ENCODE measurements at regions of chr3 and their contacts with region 1.

Region 1: DNA sequence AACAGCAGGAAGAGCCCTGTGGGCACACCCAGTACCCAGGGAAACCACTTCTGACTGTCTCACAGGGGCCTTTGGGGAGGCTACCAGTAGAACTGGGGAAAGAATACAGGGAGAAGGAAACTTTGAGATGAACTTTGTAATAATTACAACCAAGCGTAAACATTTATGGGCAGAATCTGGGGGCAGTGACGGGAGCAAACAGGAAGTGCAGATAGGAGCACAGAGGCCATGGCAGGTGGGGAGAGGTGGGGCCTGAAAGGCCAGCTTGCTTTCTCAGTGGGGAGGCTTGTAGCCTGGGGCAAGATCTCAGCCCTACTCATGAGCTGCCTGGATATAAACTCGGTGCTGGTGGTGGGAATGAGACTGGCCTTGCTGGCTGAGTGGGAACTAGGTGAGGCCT is 209.8 kb downstream of the PLCH1 start:
- DNase-seq: no peak
- H3K4me3 ChIP-seq: no peak overlapping the region
- H3K27ac ChIP-seq: no peak overlapping the region
- H3K4me1 ChIP-seq: no peaks in the 10 kb centered on the region
- H3K27me3 ChIP-seq: no peaks in the 10 kb centered on the region
- CTCF ChIP-seq: no peak
- POLR2A ChIP-seq: no peak

Region 2: GRCh38 chr3:155629056-155629455 is 94.0 kb after region 1 on chr3:
- intact Hi-C with region 1: loop called (anchors 10 kb)
- DNase-seq: no peak
- H3K4me3 ChIP-seq: no peak overlapping the region
- H3K27ac ChIP-seq: no peak overlapping the region
- H3K4me1 ChIP-seq: no peaks in the 10 kb centered on the region
- H3K27me3 ChIP-seq: no peaks in the 10 kb centered on the region
- CTCF ChIP-seq: no peak
- POLR2A ChIP-seq: no peak